Posterior vena cava (tissue), 2 donors: ENCODE measurements at regions of chr5 and their contacts with region 1.

Region 1: DNA sequence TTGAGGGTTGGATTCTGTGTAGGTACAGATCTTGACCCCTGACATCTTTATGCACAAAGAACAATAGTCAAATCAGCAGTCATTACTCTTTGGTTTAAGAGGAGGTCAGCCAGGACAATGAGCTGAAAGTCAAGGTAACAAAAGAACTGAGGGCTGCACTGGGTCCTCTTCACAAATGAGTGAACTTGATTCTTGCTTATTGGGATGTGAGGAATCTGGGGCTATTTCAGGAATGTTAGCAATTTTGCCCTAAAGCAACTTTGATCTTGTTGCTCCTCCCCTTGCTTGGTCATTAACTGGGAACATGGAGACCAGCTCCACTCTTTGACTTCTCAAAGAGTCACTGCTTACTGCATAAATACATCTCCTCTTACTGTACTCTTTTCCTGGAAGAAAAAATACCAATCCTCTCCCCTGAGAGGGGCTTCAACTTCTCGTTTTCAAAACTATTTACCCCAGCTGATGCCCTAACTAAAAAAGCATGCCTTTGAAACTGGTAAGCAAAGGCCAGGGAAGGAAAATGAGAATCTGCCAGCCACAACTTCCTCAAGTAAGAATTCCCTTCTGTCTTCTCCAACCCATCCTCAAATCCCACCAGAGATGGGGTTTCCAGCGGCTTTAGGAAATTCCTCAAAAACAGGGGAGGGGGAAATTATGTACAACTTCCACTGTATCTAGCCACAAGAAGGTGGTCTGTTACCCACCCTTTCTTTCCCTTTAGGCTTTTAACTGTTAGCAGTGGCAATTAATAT is 368.3 kb downstream of the ENC1 start:
- DNase-seq: no peak

Region 2: DNA sequence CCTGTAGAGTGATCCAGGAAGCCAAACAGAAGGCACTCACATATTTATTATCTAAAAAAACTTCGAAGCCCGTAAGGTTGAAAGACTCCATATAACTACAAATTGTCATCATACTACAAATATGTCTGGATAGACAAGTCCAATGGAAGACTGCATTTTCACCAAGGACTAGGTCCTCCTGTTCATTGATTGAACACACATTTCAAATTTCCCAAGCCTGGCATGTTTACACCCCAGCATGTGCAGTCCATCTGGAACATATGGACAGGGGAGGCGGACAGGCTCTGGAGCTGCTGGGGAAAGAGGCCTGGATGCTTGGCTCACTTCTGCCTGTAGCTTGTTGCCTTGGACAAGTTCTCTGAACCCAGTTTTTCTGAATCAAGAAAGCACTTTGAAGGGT is 10.3 kb before region 1 on chr5:
- intact Hi-C with region 1: loop called in 1 of 2 experiments (anchors 1 kb)
- DNase-seq: no peak

Region 3: GRCh38 chr5:74567461-74567860 is 295.3 kb after region 1 on chr5:
- intact Hi-C with region 1: no loop called
- DNase-seq: no peak